ENCODE measurements at regions of chr7 and their contacts with region 1.

Region 1: GRCh38 chr7:106542550-106543220 is 118.3 kb downstream of the CCDC71L start:
- DNase-seq: peak in 1 of 2 experiments; percentile 38
- H3K4me3 ChIP-seq: no peak overlapping the region
- H3K27ac ChIP-seq: no peak overlapping the region
- H3K4me1 ChIP-seq: no peaks in the 10 kb centered on the region
- H3K27me3 ChIP-seq: no peaks in the 10 kb centered on the region
- CTCF ChIP-seq: peak in 2 of 3 experiments; percentile 71 to 72; a peak in 3 of 4 replicates
- EP300 ChIP-seq: no peak
- POLR2A ChIP-seq: no peak
- RAD21 ChIP-seq: peak; percentile 73 to 78

Region 2: DNA sequence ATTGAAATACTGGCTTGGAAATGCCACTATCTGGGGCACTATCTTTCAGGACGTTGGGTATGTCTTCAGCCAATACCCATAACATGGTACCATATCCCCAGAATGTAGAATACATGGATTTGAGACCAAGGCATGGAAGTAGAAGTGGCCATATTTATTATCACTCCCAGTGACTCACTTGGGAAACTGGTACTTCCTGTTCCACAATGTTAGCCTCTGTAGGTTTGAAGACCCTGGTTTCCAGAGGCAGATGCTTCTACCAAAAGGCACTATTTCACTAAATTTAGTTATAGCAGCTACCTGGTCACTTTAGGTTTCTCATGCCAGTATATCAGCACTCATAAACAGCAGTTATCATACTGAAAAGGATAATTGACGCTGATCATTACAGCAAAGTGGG is 65.9 kb before region 1 on chr7:
- CTCF ChIA-PET with region 1: no interaction called
- POLR2A ChIA-PET with region 1: no interaction called
- DNase-seq: no peak
- H3K4me3 ChIP-seq: no peak overlapping the region
- H3K27ac ChIP-seq: no peak overlapping the region
- H3K4me1 ChIP-seq: no peaks in the 10 kb centered on the region
- H3K27me3 ChIP-seq: no peaks in the 10 kb centered on the region
- CTCF ChIP-seq: no peak
- EP300 ChIP-seq: no peak
- POLR2A ChIP-seq: no peak
- RAD21 ChIP-seq: no peak

Region 3: DNA sequence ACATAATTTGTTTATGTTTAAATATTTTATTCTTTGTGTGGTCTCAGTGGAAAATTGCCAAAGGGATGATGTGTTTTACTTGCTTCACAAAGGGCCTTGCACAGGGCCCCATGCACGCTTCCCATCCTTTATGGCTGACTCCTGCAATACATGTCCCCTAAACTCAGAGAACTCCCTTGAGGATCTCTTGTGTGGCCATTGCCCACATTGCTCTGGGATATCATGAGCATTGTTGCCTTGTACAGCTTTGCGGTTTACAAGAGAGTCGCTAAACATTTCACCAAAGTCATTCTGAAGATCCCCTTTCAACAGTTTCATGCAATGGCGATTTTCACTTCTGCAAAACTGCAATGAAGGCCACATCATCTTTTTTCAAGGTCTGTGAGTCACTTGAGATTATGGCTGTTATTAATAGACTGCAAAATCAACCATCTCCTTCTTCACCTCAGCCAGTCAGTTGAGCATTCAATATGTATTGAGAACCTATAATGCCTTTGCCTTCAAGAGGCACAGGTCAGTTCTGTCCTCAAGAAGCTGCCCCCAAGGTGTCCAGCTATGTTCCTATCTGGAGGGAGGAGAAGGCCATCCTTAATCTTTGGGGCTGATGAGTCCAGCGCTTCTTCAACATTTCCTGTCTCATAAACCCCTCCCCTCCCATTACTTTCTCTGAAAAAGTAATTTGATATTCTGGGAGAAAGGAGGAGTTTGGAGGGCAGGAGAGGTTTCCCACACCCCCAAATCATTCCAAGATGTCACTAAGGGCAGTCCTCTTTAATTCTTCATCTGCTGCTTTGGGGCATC is 10.2 kb after region 1 on chr7:
- CTCF ChIA-PET with region 1: interaction called, 13 read pairs
- POLR2A ChIA-PET with region 1: interaction called, 4 read pairs
- DNase-seq: no peak
- H3K4me3 ChIP-seq: no peak overlapping the region
- H3K27ac ChIP-seq: no peak overlapping the region
- H3K4me1 ChIP-seq: no peaks in the 10 kb centered on the region
- H3K27me3 ChIP-seq: no peaks in the 10 kb centered on the region
- CTCF ChIP-seq: no peak
- EP300 ChIP-seq: no peak
- POLR2A ChIP-seq: no peak
- RAD21 ChIP-seq: no peak

Region 4: DNA sequence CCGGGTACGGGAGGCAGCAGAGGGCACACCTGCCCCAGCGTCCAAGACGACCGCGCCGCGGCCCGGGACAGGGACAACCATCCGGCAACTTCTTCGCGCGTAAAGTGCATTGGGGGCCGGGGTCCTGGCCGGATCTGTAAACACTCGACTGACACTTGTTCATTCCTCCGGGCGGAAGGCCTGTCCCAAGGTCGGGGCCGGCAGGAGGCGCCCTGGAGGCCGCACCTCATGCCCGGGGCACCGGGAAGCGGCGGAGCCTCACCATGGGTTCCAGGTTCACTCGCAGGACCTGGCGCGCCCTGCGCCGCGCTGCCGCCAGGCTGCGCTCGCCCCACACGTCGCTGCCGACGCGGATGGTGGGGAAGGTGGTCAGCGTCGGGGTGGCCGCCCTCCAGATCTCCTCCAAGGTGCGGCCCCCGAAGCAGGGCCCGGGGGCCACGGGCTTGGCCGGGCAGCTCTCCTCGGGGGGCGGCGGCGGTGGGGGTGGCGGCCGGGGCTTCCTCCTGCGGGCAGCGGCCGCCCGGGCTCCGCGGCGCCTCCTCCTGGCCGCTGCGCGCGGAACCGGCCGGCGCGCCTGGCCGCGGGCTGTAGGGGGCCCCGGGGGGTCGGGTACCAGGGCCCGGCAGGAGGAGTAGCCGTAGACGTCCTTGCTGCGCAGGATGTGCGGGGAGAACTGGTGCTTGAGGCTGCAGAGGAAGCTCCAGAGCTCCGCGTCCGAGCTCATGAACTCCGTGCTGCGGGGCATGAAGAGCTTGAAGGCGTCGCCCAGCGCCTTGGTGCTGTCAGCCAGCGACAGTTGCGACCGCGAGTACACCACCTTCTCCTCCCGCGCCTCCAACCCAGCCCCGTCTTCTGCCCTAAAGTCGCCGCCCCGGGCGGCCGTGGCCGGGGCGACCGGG is 117.5 kb after region 1 on chr7:
- CTCF ChIA-PET with region 1: interaction called, 22 read pairs
- POLR2A ChIA-PET with region 1: interaction called, 3 read pairs
- DNase-seq: peak; percentile 76 to 92
- H3K4me3 ChIP-seq: peak overlapping the region; percentile 67 to 92 (median 80)
- H3K27ac ChIP-seq: peak overlapping the region; percentile 87
- H3K4me1 ChIP-seq: no peaks in the 10 kb centered on the region
- H3K27me3 ChIP-seq: no peaks in the 10 kb centered on the region
- CTCF ChIP-seq: peak; percentile 85 to 92 (median 86)
- EP300 ChIP-seq: peak in 1 of 2 experiments; percentile 57; a peak in 1 of 3 replicates
- POLR2A ChIP-seq: peak; percentile 62 to 67
- RAD21 ChIP-seq: peak; percentile 73 to 77

Region 5: GRCh38 chr7:106736508-106737201 is 194.0 kb after region 1 on chr7:
- CTCF ChIA-PET with region 1: interaction called, 14 read pairs
- POLR2A ChIA-PET with region 1: no interaction called
- DNase-seq: peak in 1 of 2 experiments; percentile 60
- H3K4me3 ChIP-seq: no peak overlapping the region
- H3K27ac ChIP-seq: no peak overlapping the region
- H3K4me1 ChIP-seq: peaks cover 0 to 6% (median 5%) of the 10 kb centered on the region in 4 experiments; a peak in 5 of 7 replicates
- H3K27me3 ChIP-seq: no peaks in the 10 kb centered on the region
- CTCF ChIP-seq: peak in 2 of 3 experiments; percentile 82 to 83; a peak in 3 of 4 replicates
- EP300 ChIP-seq: peak in 1 of 2 experiments; percentile 15; a peak in 1 of 3 replicates
- POLR2A ChIP-seq: no peak
- RAD21 ChIP-seq: peak; percentile 78 to 83

Region 6: GRCh38 chr7:106779877-106780276 is 237.2 kb after region 1 on chr7:
- CTCF ChIA-PET with region 1: interaction called, 12 read pairs
- POLR2A ChIA-PET with region 1: no interaction called
- DNase-seq: peak in 1 of 2 experiments; percentile 56
- H3K4me3 ChIP-seq: no peak overlapping the region
- H3K27ac ChIP-seq: no peak overlapping the region
- H3K4me1 ChIP-seq: peaks cover 0 to 3% (median 0%) of the 10 kb centered on the region in 4 experiments; a peak in 1 of 7 replicates
- H3K27me3 ChIP-seq: no peaks in the 10 kb centered on the region
- CTCF ChIP-seq: peak; percentile 56 to 68 (median 66)
- EP300 ChIP-seq: no peak
- POLR2A ChIP-seq: no peak
- RAD21 ChIP-seq: peak; percentile 58 to 71

Region 7: DNA sequence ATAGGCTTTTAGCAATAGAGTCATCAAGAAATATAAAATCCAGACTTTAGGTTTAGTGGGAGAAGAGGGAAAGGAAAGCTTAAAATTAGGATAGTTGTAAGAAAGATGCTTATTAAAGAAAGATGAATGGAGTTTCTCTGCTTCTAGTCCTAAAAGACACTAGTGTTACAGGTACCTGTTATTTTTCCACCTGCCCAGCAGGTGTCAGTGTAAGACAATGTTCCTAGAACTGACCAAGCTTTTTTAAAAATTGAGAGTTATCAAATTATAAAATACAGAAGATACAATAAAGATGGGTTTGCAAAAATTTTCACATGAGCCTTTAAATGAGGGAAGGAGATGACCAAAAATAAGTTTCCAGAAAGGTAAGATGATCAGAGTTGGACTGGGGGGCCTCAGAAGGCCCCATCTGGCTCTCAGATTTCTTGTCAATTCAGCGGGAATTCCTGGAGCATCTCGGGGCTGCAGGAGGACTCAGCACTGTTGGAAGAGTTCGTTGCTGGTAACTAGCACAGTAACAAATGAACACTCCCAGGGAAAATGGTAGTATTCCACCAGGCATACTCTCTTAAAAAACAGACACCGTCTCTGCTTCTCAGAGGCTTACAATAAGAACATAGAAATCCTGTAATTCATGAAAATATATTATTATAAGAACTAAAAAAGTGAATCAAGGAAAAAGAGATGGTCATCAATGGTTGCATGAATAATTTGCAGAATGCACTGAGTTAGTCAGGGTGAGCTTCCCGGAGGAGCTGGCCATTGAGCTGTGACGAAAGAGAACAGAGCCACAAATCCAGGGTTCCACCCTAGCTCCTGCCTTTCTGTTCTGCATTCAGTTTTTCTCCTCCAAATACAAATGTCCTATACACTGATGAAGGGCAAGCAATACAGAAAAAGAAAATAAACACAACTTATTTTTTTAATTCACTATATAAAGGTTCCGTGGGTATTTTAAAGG is 250.6 kb after region 1 on chr7:
- CTCF ChIA-PET with region 1: no interaction called
- POLR2A ChIA-PET with region 1: no interaction called
- DNase-seq: no peak
- H3K4me3 ChIP-seq: 0 out of 8 replicates have a peak overlapping the region, but pooled peaks of 1 of the 4 experiments have one; percentile 7
- H3K27ac ChIP-seq: no peak overlapping the region
- H3K4me1 ChIP-seq: no peaks in the 10 kb centered on the region
- H3K27me3 ChIP-seq: no peaks in the 10 kb centered on the region
- CTCF ChIP-seq: peak in 2 of 3 experiments; percentile 36 to 52; a peak in 2 of 4 replicates
- EP300 ChIP-seq: no peak
- POLR2A ChIP-seq: no peak
- RAD21 ChIP-seq: peak; percentile 75 to 82